Adrenal gland (tissue), 19 donors: ENCODE measurements at regions of chr12 and their contacts with region 1.

Region 1: GRCh38 chr12:26614020-26614616 is 218.9 kb downstream of the ITPR2 start:
- DNase-seq: peak in 2 of 7 donors; percentile 12 to 20
- H3K4me3 ChIP-seq: no peak overlapping the region
- H3K27ac ChIP-seq: no peak overlapping the region
- H3K4me1 ChIP-seq: no peaks in the 10 kb centered on the region
- H3K27me3 ChIP-seq: no peaks in the 10 kb centered on the region
- CTCF ChIP-seq: peak; percentile 6 to 47 (median 34)
- POLR2A ChIP-seq: no peak

Region 2: GRCh38 chr12:26555139-26555538 is 59.0 kb before region 1 on chr12:
- intact Hi-C with region 1: loop called in 1 of 2 experiments (anchors 10 kb)
- DNase-seq: peak in 1 of 7 donors; percentile 15
- H3K4me3 ChIP-seq: no peak overlapping the region
- H3K27ac ChIP-seq: no peak overlapping the region
- H3K4me1 ChIP-seq: no peaks in the 10 kb centered on the region
- H3K27me3 ChIP-seq: no peaks in the 10 kb centered on the region
- CTCF ChIP-seq: no peak
- POLR2A ChIP-seq: no peak